ENCODE measurements at regions of chr3 and their contacts with region 1.

Region 1: DNA sequence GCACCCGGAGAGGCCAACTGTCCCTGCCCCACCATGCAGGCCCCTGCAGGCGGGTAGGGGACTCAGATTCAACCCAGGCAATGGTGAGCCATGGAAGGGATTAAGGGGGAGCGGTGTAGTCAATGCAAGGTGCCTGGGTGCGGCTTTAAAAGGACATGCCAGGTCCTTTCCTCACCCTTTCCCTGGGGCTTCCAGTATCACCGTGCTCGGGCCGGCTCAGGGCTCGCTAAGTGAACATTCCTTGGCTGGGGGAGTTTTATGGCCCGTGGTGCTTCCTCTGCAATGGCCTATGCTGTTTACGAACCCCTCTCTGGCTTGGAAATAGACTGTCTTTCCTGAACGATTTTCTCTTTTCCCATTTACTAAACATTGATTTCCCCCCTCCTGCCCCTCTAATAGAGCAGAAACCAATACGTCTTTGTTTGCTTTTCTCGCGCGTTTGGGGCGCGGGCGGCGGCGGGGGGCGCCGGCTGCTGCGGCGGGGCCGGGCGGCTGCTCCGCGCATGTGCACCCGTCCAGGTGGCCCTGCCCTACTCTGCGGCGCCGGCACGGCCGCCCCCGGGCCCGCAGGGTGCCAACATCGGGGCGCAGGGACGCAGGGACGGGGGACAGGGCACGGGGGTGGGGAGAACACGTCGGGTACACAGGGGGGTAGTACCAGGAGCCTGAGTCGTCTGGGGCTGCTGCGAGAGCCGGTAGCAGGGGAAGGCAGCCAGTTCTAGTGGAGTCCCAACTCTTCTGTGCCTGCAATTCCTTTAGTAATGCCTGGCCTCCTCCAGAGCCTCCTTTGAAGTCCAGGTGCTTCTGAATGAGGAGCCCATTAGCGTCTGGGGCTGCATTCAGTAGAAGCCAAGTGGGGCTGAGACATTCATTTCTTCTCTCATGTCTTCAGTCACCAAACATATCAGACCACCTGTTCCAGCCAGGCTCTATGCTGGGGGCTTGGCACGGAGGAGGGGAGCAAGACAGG is 26.9 kb upstream of the CACNA2D2 start:
- DNase-seq: no peak
- ATAC-seq: no peak
- H3K4me3 ChIP-seq: no peak overlapping the region
- H3K27ac ChIP-seq: no peak overlapping the region
- H3K4me1 ChIP-seq: no peaks in the 10 kb centered on the region
- H3K27me3 ChIP-seq: peaks cover 0 to 28% of the 10 kb centered on the region in 2 donors
- CTCF ChIP-seq: no peak

Region 2: GRCh38 chr3:50370594-50370993 is 159.7 kb before region 1 on chr3:
- intact Hi-C with region 1: loop called in 1 of 2 experiments (anchors 10 kb)
- DNase-seq: peak in 1 of 4 donors; percentile 47
- ATAC-seq: no peak
- H3K4me3 ChIP-seq: no peak overlapping the region
- H3K27ac ChIP-seq: no peak overlapping the region
- H3K4me1 ChIP-seq: peaks cover 0 to 4% of the 10 kb centered on the region in 2 donors
- H3K27me3 ChIP-seq: peaks cover 0 to 3% of the 10 kb centered on the region in 2 donors
- CTCF ChIP-seq: no peak

Region 3: DNA sequence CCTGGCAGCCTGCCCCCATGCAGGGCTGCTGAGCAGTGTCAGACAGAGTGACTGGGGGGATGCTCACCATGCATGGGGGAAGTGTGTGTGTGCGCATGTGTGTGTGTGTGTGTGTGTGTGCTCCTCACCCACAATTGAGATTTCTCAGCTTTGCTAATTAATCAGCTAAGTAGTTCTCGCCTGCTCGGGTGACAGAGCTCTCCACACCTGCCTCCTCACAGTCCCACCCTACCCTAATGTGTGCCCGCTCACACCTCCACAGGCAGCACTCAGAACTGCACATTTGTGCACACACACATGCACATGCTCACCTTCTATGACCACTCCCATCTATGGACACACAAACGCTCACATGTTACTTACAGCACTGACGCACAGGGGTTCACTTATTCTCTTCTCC is 64.1 kb before region 1 on chr3:
- intact Hi-C with region 1: no loop called
- DNase-seq: no peak
- ATAC-seq: no peak
- H3K4me3 ChIP-seq: no peak overlapping the region
- H3K27ac ChIP-seq: no peak overlapping the region
- H3K4me1 ChIP-seq: no peaks in the 10 kb centered on the region
- H3K27me3 ChIP-seq: no peaks in the 10 kb centered on the region
- CTCF ChIP-seq: no peak

Region 4: GRCh38 chr3:50478671-50479260 is 51.5 kb before region 1 on chr3:
- intact Hi-C with region 1: no loop called
- DNase-seq: peak in 1 of 4 donors; percentile 61
- ATAC-seq: no peak
- H3K4me3 ChIP-seq: no peak overlapping the region
- H3K27ac ChIP-seq: no peak overlapping the region
- H3K4me1 ChIP-seq: peaks cover 0 to 10% of the 10 kb centered on the region in 2 donors
- H3K27me3 ChIP-seq: no peaks in the 10 kb centered on the region
- CTCF ChIP-seq: no peak